Right ventricle myocardium inferior (tissue), 1 donor: ENCODE measurements at regions of chr12 and their contacts with region 1.

Region 1: GRCh38 chr12:30695199-30696103 is at the start of gene IPO8:
- DNase-seq: peak; percentile 97
- ATAC-seq: peak; percentile 96
- total RNA-seq, gene IPO8: 21.5 TPM

Region 2: GRCh38 chr12:29921307-29921706 is 774.1 kb before region 1 on chr12:
- intact Hi-C with region 1: no loop called
- DNase-seq: no peak
- ATAC-seq: no peak

Region 3: GRCh38 chr12:30304528-30304927 is 390.9 kb before region 1 on chr12:
- intact Hi-C with region 1: no loop called
- DNase-seq: no peak
- ATAC-seq: no peak

Region 4: GRCh38 chr12:30754709-30755394 is 59.4 kb after region 1 on chr12 and contains the start of gene CAPRIN2:
- intact Hi-C with region 1: loop called (anchors 2 kb)
- DNase-seq: peak; percentile 99
- ATAC-seq: peak; percentile 100
- total RNA-seq, gene CAPRIN2: 23.2 TPM

Region 5: GRCh38 chr12:30774599-30774998 is 79.1 kb after region 1 on chr12:
- intact Hi-C with region 1: no loop called
- DNase-seq: no peak
- ATAC-seq: no peak